CD8-positive, alpha-beta T cell (primary cell): ENCODE measurements at regions of chr12 and their contacts with region 1.

Region 1: DNA sequence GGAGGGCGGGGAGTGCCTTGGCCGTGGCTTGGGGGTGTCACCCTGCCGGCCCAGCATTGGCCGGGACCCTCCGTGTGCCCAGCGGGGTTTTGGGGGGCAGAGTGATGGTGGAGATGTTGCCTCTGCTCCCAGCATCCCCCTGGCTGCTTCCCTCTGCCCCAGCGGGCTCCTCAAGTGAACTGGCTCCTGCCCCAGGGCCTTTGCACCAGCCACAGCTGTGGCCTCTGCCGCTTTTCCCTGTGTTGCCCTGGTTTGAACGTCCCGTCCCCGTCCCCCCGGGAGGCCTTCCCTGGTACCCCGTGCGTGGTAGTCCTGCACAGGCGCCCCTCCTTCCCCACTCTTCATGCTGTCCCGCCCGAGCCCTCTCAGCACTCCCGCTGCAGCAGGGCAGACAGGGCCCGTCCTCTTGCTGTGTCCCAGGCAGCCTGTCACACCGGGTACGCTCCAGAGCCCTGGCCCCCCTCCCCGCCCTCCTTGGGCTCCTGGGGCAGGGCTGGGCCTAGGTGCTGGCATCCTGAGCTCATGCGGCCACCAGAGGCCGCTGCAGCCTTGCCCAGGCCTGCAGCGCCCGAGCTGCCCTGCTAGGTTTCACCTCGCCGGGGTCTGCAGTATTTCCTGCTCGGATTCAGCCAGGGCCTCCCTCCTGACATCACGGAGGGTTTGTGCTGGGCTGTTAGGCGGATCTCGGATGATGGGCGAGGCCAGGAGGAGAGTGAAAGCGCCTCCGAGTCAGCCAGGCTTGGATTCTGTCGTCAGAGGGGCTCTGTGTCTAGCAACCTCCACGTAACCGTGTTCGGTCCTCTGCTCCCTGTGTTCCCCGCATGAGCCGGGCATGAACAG is 9.5 kb downstream of the NOC4L start:
- DNase-seq: peak; percentile 47 to 88 (median 75)
- ATAC-seq: peak; percentile 95
- H3K4me3 ChIP-seq: no peak overlapping the region
- H3K4me3 Mint-ChIP-seq: peak overlapping the region; percentile 58
- H3K27ac ChIP-seq: no peak overlapping the region
- H3K27ac Mint-ChIP-seq: no peak overlapping the region
- H3K4me1 ChIP-seq: peaks cover 5% of the 10 kb centered on the region
- H3K4me1 Mint-ChIP-seq: peaks cover 2% of the 10 kb centered on the region
- H3K27me3 ChIP-seq: no peaks in the 10 kb centered on the region
- H3K27me3 Mint-ChIP-seq: no peaks in the 10 kb centered on the region
- CTCF ChIP-seq: peak; percentile 92

Region 2: DNA sequence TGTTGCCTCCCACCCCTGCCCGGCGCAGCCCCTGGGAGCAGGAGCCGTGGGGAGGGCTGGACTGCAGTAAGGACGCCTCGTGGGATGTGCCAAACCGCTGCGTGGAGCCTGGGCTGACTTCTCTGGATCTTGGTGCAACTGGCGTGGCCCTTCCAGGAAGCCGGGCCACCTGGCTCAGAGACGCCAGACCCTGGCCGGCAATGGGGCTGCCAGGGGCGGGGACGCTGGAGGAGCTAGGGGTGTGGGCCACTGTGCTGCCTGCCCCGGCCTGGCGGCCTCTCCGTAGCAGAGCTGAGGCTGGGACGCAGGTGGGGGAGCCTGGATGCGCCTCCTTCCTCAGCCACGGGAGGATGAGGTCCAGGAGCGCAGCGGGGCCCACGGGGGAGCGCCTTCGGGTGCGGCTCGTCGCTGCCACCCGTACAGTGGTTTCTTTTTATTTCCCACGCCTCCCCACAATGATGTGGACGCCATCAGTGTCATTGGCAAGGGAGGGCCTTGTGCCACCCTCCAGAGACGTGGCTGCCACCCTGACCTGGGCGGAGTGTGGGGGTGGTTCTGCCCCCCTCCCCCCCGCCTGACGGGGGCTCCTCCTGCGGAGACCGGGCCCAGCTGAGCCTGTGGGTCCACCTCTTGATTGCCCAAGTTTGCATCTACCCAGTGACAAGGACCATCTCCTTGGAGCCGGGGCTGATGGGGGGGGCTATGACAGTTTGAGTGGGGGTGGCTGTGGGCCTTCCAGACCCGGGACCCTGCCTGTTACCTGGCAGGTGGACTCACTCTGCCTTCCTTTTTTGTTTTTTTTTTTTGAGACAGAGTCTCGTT is 20.9 kb before region 1 on chr12:
- CTCF ChIA-PET with region 1: no interaction called
- POLR2A ChIA-PET with region 1: no interaction called
- intact Hi-C with region 1: no loop called
- DNase-seq: no peak
- ATAC-seq: no peak
- H3K4me3 ChIP-seq: no peak overlapping the region
- H3K4me3 Mint-ChIP-seq: no peak overlapping the region
- H3K27ac ChIP-seq: no peak overlapping the region
- H3K27ac Mint-ChIP-seq: no peak overlapping the region
- H3K4me1 ChIP-seq: no peaks in the 10 kb centered on the region
- H3K4me1 Mint-ChIP-seq: no peaks in the 10 kb centered on the region
- H3K27me3 ChIP-seq: no peaks in the 10 kb centered on the region
- H3K27me3 Mint-ChIP-seq: no peaks in the 10 kb centered on the region
- CTCF ChIP-seq: no peak

Region 3: DNA sequence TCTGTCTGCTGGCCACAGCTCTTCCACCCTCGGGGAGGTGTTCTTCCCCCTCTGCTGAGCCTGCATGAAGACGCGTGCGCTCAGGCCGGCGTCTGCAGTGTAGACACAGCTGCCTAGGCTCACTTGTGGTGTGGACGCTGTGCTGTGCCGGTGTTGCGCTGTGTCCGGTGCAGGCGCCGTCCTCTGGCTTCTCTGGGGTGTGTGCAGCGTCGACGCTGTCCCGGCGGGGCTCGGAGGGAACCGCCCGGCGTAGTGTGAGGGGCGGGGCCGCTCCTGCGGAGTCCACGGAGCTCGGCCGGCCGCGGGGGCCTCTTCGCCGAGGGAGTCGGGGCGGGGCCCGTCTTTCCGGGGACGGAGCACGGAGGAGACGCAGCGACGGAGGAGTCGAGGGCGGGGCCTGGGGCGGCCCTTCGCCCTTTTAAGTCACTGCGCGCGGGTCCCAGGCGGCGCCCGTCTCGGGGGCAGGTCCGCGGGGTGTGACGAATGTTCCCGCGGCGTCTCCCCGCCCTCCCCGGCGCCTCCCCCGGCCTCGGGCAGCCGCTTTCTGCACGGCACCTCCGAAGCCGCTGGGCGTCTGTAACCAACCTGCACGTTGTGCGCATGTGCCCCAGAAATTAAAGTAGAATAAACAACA is 35.8 kb after region 1 on chr12:
- CTCF ChIA-PET with region 1: interaction called, 7 read pairs
- POLR2A ChIA-PET with region 1: interaction called, 9 read pairs
- intact Hi-C with region 1: loop called in 1 of 2 experiments (anchors 2 kb)
- DNase-seq: peak; percentile 88 to 97 (median 93)
- ATAC-seq: peak; percentile 88
- H3K4me3 ChIP-seq: peak overlapping the region; percentile 71 to 94
- H3K4me3 Mint-ChIP-seq: peak overlapping the region; percentile 94
- H3K27ac ChIP-seq: peak overlapping the region; percentile 80 to 81
- H3K27ac Mint-ChIP-seq: peak overlapping the region; percentile 96
- H3K4me1 ChIP-seq: peaks cover 47% of the 10 kb centered on the region
- H3K4me1 Mint-ChIP-seq: peaks cover 50% of the 10 kb centered on the region
- H3K27me3 ChIP-seq: no peaks in the 10 kb centered on the region
- H3K27me3 Mint-ChIP-seq: no peaks in the 10 kb centered on the region
- CTCF ChIP-seq: no peak

Region 4: GRCh38 chr12:132218915-132219314 is 65.2 kb after region 1 on chr12:
- CTCF ChIA-PET with region 1: interaction called, 44 read pairs
- POLR2A ChIA-PET with region 1: interaction called, 5 read pairs
- intact Hi-C with region 1: loop called (anchors 1 kb)
- DNase-seq: peak in 7 of 9 experiments; percentile 6 to 74 (median 53)
- ATAC-seq: peak; percentile 72
- H3K4me3 ChIP-seq: no peak overlapping the region
- H3K4me3 Mint-ChIP-seq: no peak overlapping the region
- H3K27ac ChIP-seq: no peak overlapping the region
- H3K27ac Mint-ChIP-seq: no peak overlapping the region
- H3K4me1 ChIP-seq: peaks cover 10% of the 10 kb centered on the region
- H3K4me1 Mint-ChIP-seq: peaks cover 11% of the 10 kb centered on the region
- H3K27me3 ChIP-seq: peaks cover 0 to 4% of the 10 kb centered on the region in 2 experiments
- H3K27me3 Mint-ChIP-seq: peaks cover 20% of the 10 kb centered on the region
- CTCF ChIP-seq: peak; percentile 61

Region 5: GRCh38 chr12:132414634-132415326 is 261.1 kb after region 1 on chr12:
- CTCF ChIA-PET with region 1: interaction called, 13 read pairs
- POLR2A ChIA-PET with region 1: no interaction called
- intact Hi-C with region 1: loop called in 1 of 2 experiments (anchors 5 kb)
- DNase-seq: peak; percentile 47 to 87 (median 74)
- ATAC-seq: peak; percentile 93
- H3K4me3 ChIP-seq: no peak overlapping the region
- H3K4me3 Mint-ChIP-seq: no peak overlapping the region
- H3K27ac ChIP-seq: no peak overlapping the region
- H3K27ac Mint-ChIP-seq: no peak overlapping the region
- H3K4me1 ChIP-seq: peaks cover 14% of the 10 kb centered on the region
- H3K4me1 Mint-ChIP-seq: no peaks in the 10 kb centered on the region
- H3K27me3 ChIP-seq: peaks cover 0 to 11% of the 10 kb centered on the region in 2 experiments
- H3K27me3 Mint-ChIP-seq: no peaks in the 10 kb centered on the region
- CTCF ChIP-seq: peak; percentile 72

Region 6: GRCh38 chr12:132560614-132561426 is 407.1 kb after region 1 on chr12:
- CTCF ChIA-PET with region 1: no interaction called
- POLR2A ChIA-PET with region 1: no interaction called
- intact Hi-C with region 1: loop called in 1 of 2 experiments (anchors 5 kb)
- DNase-seq: peak; percentile 44 to 81 (median 72)
- ATAC-seq: peak; percentile 57
- H3K4me3 ChIP-seq: peak overlapping the region; percentile 20 to 34
- H3K4me3 Mint-ChIP-seq: peak overlapping the region; percentile 67
- H3K27ac ChIP-seq: no peak overlapping the region
- H3K27ac Mint-ChIP-seq: no peak overlapping the region
- H3K4me1 ChIP-seq: peaks cover 27% of the 10 kb centered on the region
- H3K4me1 Mint-ChIP-seq: peaks cover 20% of the 10 kb centered on the region
- H3K27me3 ChIP-seq: peaks cover 7 to 19% of the 10 kb centered on the region in 2 experiments
- H3K27me3 Mint-ChIP-seq: peaks cover 11% of the 10 kb centered on the region
- CTCF ChIP-seq: peak; percentile 67